HCT116 (cell line): ENCODE measurements at regions of chr9 and their contacts with region 1.

Region 1: GRCh38 chr9:75455444-75455921 is 367.2 kb downstream of the OSTF1 start:
- DNase-seq: no peak
- ATAC-seq: no peak
- H3K4me3 ChIP-seq: no peak overlapping the region
- H3K27ac ChIP-seq: no peak overlapping the region
- H3K4me1 ChIP-seq: no peaks in the 10 kb centered on the region
- H3K27me3 ChIP-seq: peaks cover 15% of the 10 kb centered on the region; the same call in 1 of the 2 replicates
- CTCF ChIP-seq: no peak
- POLR2A ChIP-seq: no peak
- RAD21 ChIP-seq: no peak

Region 2: DNA sequence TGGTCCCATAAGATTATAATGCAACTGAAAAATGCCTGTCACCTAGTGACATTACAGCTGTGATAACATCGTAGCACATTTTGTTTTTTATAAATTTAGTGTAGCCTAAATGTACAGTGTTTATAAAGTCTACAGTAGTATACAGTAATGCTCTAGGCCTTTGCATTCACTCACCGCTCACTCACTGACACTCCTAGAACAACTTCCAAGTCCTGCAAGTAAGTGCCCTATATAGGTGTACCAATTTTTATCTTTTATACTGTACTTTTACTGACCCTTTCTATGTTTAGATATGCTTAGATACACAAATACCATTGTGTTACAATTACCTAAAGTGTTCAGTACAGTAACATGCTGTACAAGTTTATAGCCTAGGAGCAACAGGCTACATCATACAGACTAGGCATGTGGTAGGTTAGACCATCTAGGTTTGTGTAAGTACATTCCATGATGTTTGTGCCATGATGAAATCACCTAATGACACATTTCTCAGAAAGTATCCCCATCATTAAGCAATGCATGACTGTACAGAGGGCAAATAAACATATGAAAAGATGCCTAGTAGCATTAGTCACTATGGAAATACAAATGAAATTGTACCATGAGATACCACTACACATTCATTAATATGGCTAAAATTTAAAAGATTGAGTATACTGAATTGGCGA is 695.3 kb before region 1 on chr9:
- CTCF ChIA-PET with region 1: no interaction called
- POLR2A ChIA-PET with region 1: no interaction called
- RAD21 ChIA-PET with region 1: no interaction called
- intact Hi-C with region 1: no loop called
- DNase-seq: no peak
- ATAC-seq: no peak
- H3K4me3 ChIP-seq: no peak overlapping the region
- H3K27ac ChIP-seq: no peak overlapping the region
- H3K4me1 ChIP-seq: no peaks in the 10 kb centered on the region
- H3K27me3 ChIP-seq: no peaks in the 10 kb centered on the region
- CTCF ChIP-seq: no peak
- POLR2A ChIP-seq: no peak
- RAD21 ChIP-seq: no peak

Region 3: GRCh38 chr9:75429531-75430475 is 25.7 kb before region 1 on chr9:
- CTCF ChIA-PET with region 1: no interaction called
- POLR2A ChIA-PET with region 1: no interaction called
- RAD21 ChIA-PET with region 1: no interaction called
- intact Hi-C with region 1: no loop called
- DNase-seq: no peak
- ATAC-seq: no peak
- H3K4me3 ChIP-seq: no peak overlapping the region
- H3K27ac ChIP-seq: no peak overlapping the region
- H3K4me1 ChIP-seq: no peaks in the 10 kb centered on the region
- H3K27me3 ChIP-seq: peaks cover 18% of the 10 kb centered on the region
- CTCF ChIP-seq: no peak
- POLR2A ChIP-seq: no peak
- RAD21 ChIP-seq: no peak

Region 4: DNA sequence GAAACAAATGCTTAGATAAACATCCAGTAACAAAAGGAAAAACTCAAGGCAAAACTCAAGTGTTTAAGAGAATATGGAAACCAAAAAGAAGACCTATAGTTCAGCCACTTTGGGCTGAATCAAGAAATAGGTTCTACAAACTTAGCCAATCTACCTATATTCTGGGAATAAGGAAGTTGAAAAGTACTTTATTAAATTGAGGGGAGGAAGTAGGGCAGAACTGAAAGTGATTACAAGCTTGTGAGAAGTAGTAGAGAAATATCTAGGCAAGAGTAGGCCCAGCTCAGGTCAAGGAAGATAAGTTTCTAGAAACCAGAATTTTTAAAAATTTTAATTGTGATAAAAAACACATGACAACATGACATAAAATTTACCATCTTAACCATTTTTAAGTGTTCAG is 50.2 kb after region 1 on chr9:
- CTCF ChIA-PET with region 1: no interaction called
- POLR2A ChIA-PET with region 1: no interaction called
- RAD21 ChIA-PET with region 1: no interaction called
- intact Hi-C with region 1: loop called (anchors 10 kb)
- DNase-seq: no peak
- ATAC-seq: no peak
- H3K4me3 ChIP-seq: no peak overlapping the region
- H3K27ac ChIP-seq: no peak overlapping the region
- H3K4me1 ChIP-seq: no peaks in the 10 kb centered on the region
- H3K27me3 ChIP-seq: no peaks in the 10 kb centered on the region
- CTCF ChIP-seq: no peak
- POLR2A ChIP-seq: no peak
- RAD21 ChIP-seq: no peak

Region 5: GRCh38 chr9:75658301-75658910 is 202.9 kb after region 1 on chr9:
- CTCF ChIA-PET with region 1: no interaction called
- POLR2A ChIA-PET with region 1: no interaction called
- RAD21 ChIA-PET with region 1: no interaction called
- intact Hi-C with region 1: no loop called
- DNase-seq: no peak
- ATAC-seq: no peak
- H3K4me3 ChIP-seq: no peak overlapping the region
- H3K27ac ChIP-seq: no peak overlapping the region
- H3K4me1 ChIP-seq: no peaks in the 10 kb centered on the region
- H3K27me3 ChIP-seq: no peaks in the 10 kb centered on the region; the same call in 1 of the 2 replicates
- CTCF ChIP-seq: no peak
- POLR2A ChIP-seq: no peak
- RAD21 ChIP-seq: no peak

Region 6: DNA sequence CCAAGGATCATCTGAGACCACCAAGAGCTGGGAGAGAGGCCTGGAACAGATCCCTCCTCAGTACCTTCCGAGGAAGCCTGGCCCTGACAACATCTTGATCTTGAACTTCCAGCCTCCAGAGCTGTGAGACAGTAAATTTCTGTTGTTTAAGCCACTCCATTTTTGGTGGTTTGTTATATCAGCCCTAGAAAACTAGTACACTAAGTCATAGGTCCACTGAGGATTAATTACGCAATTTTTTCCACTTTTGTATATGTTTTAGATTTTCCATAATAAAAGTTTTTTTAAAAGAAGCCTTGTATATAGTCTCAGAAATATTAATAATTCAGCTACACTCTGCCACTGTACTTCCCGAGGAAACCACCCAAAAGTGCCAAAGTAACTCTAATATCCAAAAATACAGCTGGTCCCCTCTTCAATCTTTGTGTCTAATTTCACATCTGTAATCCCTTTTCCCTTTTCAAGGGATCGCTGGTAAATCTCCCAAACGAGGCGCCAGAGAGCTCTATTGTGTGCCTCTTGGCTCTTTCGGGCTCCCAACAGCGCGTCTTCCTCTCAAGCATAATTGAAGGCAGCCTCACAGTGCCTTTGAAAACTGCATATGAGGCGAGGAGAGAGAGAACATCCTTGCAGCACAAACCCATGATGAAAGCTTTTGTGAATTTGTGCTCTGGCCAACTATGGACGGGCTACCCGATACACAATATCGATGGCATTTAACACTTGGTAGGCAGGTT is 1417.7 kb after region 1 on chr9:
- CTCF ChIA-PET with region 1: no interaction called
- POLR2A ChIA-PET with region 1: no interaction called
- RAD21 ChIA-PET with region 1: no interaction called
- intact Hi-C with region 1: no loop called
- DNase-seq: no peak
- ATAC-seq: no peak
- H3K4me3 ChIP-seq: no peak overlapping the region
- H3K27ac ChIP-seq: no peak overlapping the region
- H3K4me1 ChIP-seq: peaks cover 0 to 4% of the 10 kb centered on the region in 2 experiments; a peak in 1 of 4 replicates
- H3K27me3 ChIP-seq: no peaks in the 10 kb centered on the region
- CTCF ChIP-seq: no peak
- POLR2A ChIP-seq: no peak
- RAD21 ChIP-seq: no peak